Activated T-helper 1 cell treated with anti-CD3 and anti-CD28 coated beads, Interleukin-12 subunit alpha, Interleukin-12 subunit beta, Interleukin-2, Interleukin-4 antibody, amounts not matched to agents 30 ng/mL and 10 ng/mL and 1 ng/mL, durations not matched to agents 14 hours and 24 hours and 36 hours (primary cell): ENCODE measurements at regions of chr2 and their contacts with region 1.

Region 1: GRCh38 chr2:198066597-198066996 is 262.2 kb downstream of the PLCL1 start:
- DNase-seq: no peak
- H3K4me3 Mint-ChIP-seq: no peak overlapping the region
- H3K27ac Mint-ChIP-seq: no peak overlapping the region
- H3K4me1 Mint-ChIP-seq: no peaks in the 10 kb centered on the region
- H3K27me3 Mint-ChIP-seq: no peaks in the 10 kb centered on the region

Region 2: DNA sequence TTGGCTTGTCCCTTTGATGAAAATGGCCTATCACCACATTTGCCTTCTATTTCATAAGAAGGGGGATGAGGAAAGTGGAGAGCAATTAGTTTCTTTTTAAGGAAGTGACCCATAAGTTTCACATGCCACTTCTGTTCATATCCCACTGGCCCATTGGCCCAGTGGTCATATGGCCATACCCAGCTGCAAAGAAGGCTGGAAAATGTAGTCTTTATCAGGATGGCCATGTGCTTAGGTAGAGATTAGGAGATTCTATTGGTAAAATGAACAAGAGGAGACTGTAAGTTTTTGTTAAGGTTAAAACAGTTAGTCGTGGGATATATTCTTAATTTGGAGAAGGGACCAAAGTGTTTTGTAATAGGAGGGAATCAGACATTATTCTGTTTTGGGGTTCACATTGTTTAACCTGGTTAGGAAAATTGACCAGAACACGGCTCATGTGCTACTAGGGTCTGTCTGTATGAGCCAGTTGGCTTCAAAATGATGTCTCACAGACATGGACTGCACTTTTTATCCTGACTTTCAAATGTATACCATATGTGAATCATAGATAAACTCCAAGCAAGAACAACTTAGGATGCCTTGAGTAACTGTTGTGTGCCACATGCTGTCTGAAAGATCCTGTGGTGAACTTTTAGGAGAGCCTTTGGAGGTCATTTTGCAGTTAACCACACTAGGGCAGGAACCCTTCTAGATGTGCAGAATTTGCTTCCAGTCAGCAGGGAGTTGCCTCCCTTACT is 244.9 kb before region 1 on chr2:
- intact Hi-C with region 1: no loop called
- DNase-seq: no peak
- H3K4me3 Mint-ChIP-seq: no peak overlapping the region
- H3K27ac Mint-ChIP-seq: no peak overlapping the region
- H3K4me1 Mint-ChIP-seq: peaks cover 5% of the 10 kb centered on the region
- H3K27me3 Mint-ChIP-seq: no peaks in the 10 kb centered on the region

Region 3: GRCh38 chr2:198116756-198117155 is 50.2 kb after region 1 on chr2:
- intact Hi-C with region 1: loop called (anchors 5 kb)
- DNase-seq: no peak
- H3K4me3 Mint-ChIP-seq: no peak overlapping the region
- H3K27ac Mint-ChIP-seq: no peak overlapping the region
- H3K4me1 Mint-ChIP-seq: no peaks in the 10 kb centered on the region
- H3K27me3 Mint-ChIP-seq: peaks cover 2% of the 10 kb centered on the region

Region 4: DNA sequence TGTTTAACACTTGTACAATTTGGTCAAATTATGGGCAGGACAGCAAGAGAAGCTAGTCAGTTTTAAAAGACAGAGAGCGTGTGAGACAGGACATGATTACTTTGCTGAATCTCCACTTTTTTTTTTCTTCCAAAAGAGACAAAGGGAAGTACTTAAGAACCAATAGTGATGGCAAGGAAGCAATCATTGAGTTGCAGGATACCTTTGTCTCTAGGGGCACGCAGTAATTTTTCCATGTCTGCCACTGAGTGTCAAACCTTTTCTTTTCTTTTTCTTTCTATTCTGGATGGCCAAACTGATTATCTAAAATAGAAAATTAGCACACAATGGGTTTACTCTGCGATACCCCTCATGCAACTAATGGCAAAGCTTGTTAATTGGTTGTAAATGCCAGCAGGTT is 270.8 kb after region 1 on chr2:
- intact Hi-C with region 1: no loop called
- DNase-seq: no peak
- H3K4me3 Mint-ChIP-seq: no peak overlapping the region
- H3K27ac Mint-ChIP-seq: no peak overlapping the region
- H3K4me1 Mint-ChIP-seq: no peaks in the 10 kb centered on the region
- H3K27me3 Mint-ChIP-seq: peaks cover 14% of the 10 kb centered on the region